Pancreas (tissue), 10 donors: ENCODE measurements at regions of chr2 and their contacts with region 1.

Region 1: GRCh38 chr2:27703638-27704341 is 40.1 kb downstream of the SLC4A1AP start:
- DNase-seq: peak; percentile 68 to 89 (median 82)
- ATAC-seq: peak; percentile 33 to 70 (median 63)
- H3K4me3 ChIP-seq: no peak overlapping the region
- H3K27ac ChIP-seq: no peak overlapping the region
- H3K4me1 ChIP-seq: peaks cover 0 to 13% (median 5%) of the 10 kb centered on the region in 3 donors
- H3K27me3 ChIP-seq: no peaks in the 10 kb centered on the region
- CTCF ChIP-seq: peak; percentile 77 to 93 (median 89)

Region 2: GRCh38 chr2:27380626-27381545 is 322.9 kb before region 1 on chr2 and contains the start of gene ZNF513:
- intact Hi-C with region 1: no loop called
- DNase-seq: peak; percentile 96 to 99 (median 97)
- ATAC-seq: peak; percentile 92 to 94 (median 92)
- H3K4me3 ChIP-seq: peak within 1 kb of the TSS; percentile 44 to 64 (median 56)
- H3K27ac ChIP-seq: peak within 1 kb of the TSS; percentile 79 to 92 (median 90)
- H3K4me1 ChIP-seq: peaks cover 5 to 14% (median 5%) of the 10 kb centered on the region in 3 donors
- H3K27me3 ChIP-seq: no peaks in the 10 kb centered on the region
- CTCF ChIP-seq: no peak
- total RNA-seq, gene ZNF513: 3.7 to 10.4 (median 7.6) TPM

Region 3: GRCh38 chr2:27754138-27754588 is 50.4 kb after region 1 on chr2:
- intact Hi-C with region 1: loop called in 1 of 3 experiments (anchors 10 kb)
- DNase-seq: peak; percentile 77 to 91 (median 87)
- ATAC-seq: peak; percentile 80 to 90 (median 84)
- H3K4me3 ChIP-seq: peak overlapping the region in 1 of 4 donors; percentile 46
- H3K27ac ChIP-seq: peak overlapping the region in 2 of 4 donors; percentile 98
- H3K4me1 ChIP-seq: peaks cover 9 to 22% (median 12%) of the 10 kb centered on the region in 3 donors
- H3K27me3 ChIP-seq: no peaks in the 10 kb centered on the region
- CTCF ChIP-seq: peak; percentile 45 to 70 (median 64)

Region 4: DNA sequence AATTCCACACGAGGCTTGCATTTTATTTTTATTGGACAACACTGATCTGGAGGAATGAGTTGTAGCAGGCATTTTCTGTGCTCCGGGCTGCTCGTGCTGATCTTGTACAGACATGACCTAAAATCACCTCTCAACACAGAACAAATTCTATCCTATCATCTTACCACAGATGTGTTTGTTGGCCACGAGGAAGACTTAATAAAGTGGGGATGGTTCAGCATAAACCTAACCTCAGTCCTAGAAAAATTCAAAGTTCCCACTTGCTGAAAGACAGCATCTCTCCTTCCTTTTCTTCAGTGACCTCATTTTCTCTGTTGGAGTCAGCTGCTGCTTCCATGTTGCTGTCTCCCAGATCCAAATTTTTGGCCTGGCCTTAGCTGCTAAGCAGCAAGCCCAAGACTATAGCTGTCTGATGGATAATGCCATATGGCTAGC is 141.0 kb after region 1 on chr2:
- intact Hi-C with region 1: no loop called
- DNase-seq: no peak
- ATAC-seq: no peak
- H3K4me3 ChIP-seq: no peak overlapping the region
- H3K27ac ChIP-seq: no peak overlapping the region
- H3K4me1 ChIP-seq: no peaks in the 10 kb centered on the region
- H3K27me3 ChIP-seq: no peaks in the 10 kb centered on the region
- CTCF ChIP-seq: no peak